PC-9 (cell line): ENCODE measurements at regions of chr19 and their contacts with region 1.

Region 1: DNA sequence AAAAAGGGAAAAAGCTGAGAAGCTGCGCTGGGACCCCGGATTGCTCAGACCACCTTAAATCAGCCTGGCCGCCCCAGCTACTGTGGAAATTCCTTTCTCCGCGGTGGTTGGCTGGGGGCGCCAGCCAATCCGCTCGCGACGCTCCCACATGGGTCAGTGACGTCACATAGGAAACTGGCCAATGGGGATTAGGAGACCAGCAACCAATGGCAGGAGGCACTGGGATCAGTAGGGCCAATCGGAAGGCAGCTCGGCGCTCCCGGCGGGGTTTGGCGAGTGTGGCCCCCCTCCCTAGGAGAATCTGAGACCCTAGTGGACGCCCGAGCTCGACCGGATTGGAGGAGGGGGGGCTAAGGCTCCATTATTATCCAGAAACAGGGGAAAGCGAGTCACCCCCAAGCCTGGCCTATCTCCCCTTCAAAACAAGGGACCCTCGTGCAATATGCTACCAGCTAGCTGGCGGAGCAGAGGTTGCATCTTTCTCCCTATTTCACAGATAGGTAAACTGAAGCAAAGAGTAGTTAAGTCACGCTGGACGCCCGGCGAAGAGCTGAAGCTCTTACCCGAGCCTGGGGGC is 6.5 kb upstream of the TLE2 start:
- DNase-seq: peak; percentile 89 to 95
- H3K4me3 ChIP-seq: peak overlapping the region; percentile 72
- H3K27ac ChIP-seq: peak overlapping the region; percentile 52; the same call in 1 of the 2 replicates
- H3K4me1 ChIP-seq: peaks cover 8% of the 10 kb centered on the region; the same call in 1 of the 2 replicates
- H3K27me3 ChIP-seq: no peaks in the 10 kb centered on the region
- CTCF ChIP-seq: no peak

Region 2: DNA sequence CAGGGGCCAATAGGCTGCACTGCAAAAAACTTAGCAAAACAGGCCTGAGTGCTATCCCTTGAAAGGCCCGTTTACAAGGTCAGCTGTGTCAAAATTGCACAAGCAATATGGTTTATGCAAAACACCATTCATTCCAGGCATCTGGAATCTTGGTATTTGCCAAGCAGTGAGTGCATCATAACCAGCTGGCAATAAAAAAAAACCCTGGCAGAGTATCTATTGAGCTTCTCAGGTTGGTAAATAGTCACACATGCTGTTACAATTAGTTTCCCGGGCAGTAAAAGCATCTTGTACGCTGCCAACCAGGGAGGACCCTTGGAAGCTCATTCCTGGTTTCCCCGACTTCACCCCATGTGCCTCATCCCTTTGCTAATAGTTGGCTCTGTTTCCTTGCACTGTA is 112.1 kb before region 1 on chr19:
- CTCF ChIA-PET with region 1: no interaction called
- POLR2A ChIA-PET with region 1: interaction called, 12 read pairs
- intact Hi-C with region 1: no loop called
- DNase-seq: no peak
- H3K4me3 ChIP-seq: no peak overlapping the region
- H3K27ac ChIP-seq: no peak overlapping the region
- H3K4me1 ChIP-seq: no peaks in the 10 kb centered on the region
- H3K27me3 ChIP-seq: no peaks in the 10 kb centered on the region
- CTCF ChIP-seq: no peak

Region 3: GRCh38 chr19:2977001-2977685 is 58.5 kb before region 1 on chr19 and contains the start of gene TLE6:
- CTCF ChIA-PET with region 1: no interaction called
- POLR2A ChIA-PET with region 1: interaction called, 3 read pairs
- intact Hi-C with region 1: loop called (anchors 5 kb)
- DNase-seq: peak; percentile 85 to 95
- H3K4me3 ChIP-seq: peak within 1 kb of the TSS; percentile 60; the same call in 1 of the 2 replicates
- H3K27ac ChIP-seq: no peak within 1 kb of the TSS
- H3K4me1 ChIP-seq: 0 out of 2 replicates have a peak, but pooled peaks cover 4% of the 10 kb centered on the region
- H3K27me3 ChIP-seq: no peaks in the 10 kb centered on the region
- CTCF ChIP-seq: no peak
- total RNA-seq, gene TLE6: 0.90 and 1.1 TPM in 2 replicates

Region 4: GRCh38 chr19:3118247-3119101 is 82.8 kb after region 1 on chr19:
- CTCF ChIA-PET with region 1: no interaction called
- POLR2A ChIA-PET with region 1: no interaction called
- intact Hi-C with region 1: no loop called
- DNase-seq: no peak
- H3K4me3 ChIP-seq: no peak overlapping the region
- H3K27ac ChIP-seq: no peak overlapping the region
- H3K4me1 ChIP-seq: no peaks in the 10 kb centered on the region
- H3K27me3 ChIP-seq: no peaks in the 10 kb centered on the region
- CTCF ChIP-seq: no peak